B cell (primary cell): ENCODE measurements at regions of chr17 and their contacts with region 1.

Region 1: DNA sequence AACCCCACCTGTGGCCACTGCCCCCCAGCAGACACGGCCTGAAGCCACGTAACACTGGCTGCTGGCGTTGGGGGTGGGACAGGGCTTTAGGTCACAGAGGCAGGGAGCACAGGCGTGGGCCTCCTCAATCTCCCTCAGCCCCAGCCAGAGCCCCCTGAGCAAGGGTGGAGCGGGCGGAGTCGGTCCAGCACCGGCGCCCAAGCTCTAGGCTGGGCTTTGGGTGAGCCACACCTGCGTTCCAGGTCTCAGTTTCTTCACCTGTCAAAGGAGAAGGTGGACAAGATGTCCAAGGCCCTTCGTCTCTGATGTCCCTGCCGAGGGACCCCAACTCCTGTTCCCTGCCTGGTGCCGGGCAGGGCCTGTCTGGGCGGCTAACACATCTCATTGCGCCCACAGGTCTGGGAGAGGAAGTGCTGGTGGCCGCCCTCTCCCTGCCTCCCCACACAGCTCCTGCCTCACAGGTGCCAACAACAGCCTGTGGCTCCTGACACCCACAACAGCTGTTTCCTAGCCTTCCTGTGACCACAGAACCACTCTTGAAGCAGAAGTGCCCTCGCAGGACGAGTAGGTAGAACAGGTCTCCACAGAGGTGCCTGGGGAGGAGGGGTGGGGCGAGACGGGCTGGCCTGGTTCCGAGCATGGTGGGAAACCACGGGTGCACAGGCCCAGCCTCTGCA is 12.0 kb downstream of the FAM83G start:
- DNase-seq: peak; percentile 83
- ATAC-seq: peak; percentile 82
- H3K4me3 ChIP-seq: peak overlapping the region in 1 of 5 experiments; percentile 6
- H3K4me3 Mint-ChIP-seq: peak overlapping the region; percentile 67
- H3K27ac ChIP-seq: no peak overlapping the region
- H3K27ac Mint-ChIP-seq: peak overlapping the region; percentile 76
- H3K4me1 ChIP-seq: peaks cover 24 to 27% of the 10 kb centered on the region in 2 donors
- H3K4me1 Mint-ChIP-seq: peaks cover 21% of the 10 kb centered on the region
- H3K27me3 ChIP-seq: no peaks in the 10 kb centered on the region
- H3K27me3 Mint-ChIP-seq: no peaks in the 10 kb centered on the region
- CTCF ChIP-seq: no peak

Region 2: DNA sequence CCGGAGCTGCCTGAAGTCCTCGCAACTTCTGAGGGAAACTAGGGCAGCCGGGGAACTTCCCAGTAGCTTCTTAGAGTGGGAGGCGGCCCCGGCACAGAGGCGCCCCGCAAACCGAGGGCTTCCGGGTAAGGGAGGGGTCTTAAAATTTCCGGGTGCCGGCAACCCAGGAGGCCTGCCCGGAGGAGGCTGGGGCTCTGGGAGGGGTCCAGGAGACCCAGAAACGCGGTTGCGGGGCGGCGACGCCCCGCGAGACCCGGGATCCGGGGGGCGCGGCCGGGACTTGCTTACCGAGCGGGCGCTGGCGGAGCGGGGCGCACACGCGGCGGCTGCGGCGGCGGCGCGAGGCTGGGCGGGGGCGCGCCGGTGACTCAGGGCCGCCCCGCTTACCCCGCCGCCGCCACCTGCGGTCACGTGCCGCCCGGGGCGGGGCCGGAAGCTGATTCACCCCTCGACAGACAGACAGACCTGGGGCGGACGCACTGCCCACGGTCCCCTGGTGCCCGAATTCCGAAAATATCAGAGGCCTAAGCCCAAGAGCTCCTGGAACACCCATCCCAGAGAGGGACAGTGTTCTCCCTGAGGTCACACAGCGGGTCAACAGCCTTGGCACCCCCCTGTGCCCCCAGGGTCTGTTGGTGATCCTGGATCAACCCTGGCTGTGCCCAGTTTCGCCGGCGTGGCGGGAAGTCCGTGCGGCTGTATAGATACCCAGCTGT is 12.0 kb after region 1 on chr17 and contains the start of gene FAM83G:
- CTCF ChIA-PET with region 1: no interaction called
- POLR2A ChIA-PET with region 1: interaction called, 5 read pairs
- intact Hi-C with region 1: loop called (anchors 1 kb)
- DNase-seq: peak; percentile 78
- ATAC-seq: peak; percentile 83
- H3K4me3 ChIP-seq: peak within 1 kb of the TSS; percentile 43 to 85 (median 77)
- H3K4me3 Mint-ChIP-seq: peak within 1 kb of the TSS; percentile 88
- H3K27ac ChIP-seq: peak within 1 kb of the TSS; percentile 48 to 78
- H3K27ac Mint-ChIP-seq: peak within 1 kb of the TSS; percentile 84
- H3K4me1 ChIP-seq: peaks cover 26 to 40% of the 10 kb centered on the region in 2 donors
- H3K4me1 Mint-ChIP-seq: peaks cover 40% of the 10 kb centered on the region
- H3K27me3 ChIP-seq: no peaks in the 10 kb centered on the region
- H3K27me3 Mint-ChIP-seq: no peaks in the 10 kb centered on the region
- CTCF ChIP-seq: no peak
- total RNA-seq, gene FAM83G: 14.3 and 14.6 TPM in 2 replicates